Mammary epithelial cell (primary cell): ENCODE measurements at regions of chr12 and their contacts with region 1.

Region 1: GRCh38 chr12:15532364-15532977 is 210.2 kb downstream of the PTPRO start:
- DNase-seq: peak; percentile 70
- H3K4me3 ChIP-seq: no peak overlapping the region
- H3K27ac ChIP-seq: no peak overlapping the region
- H3K4me1 ChIP-seq: peaks cover 7% of the 10 kb centered on the region
- H3K27me3 ChIP-seq: no peaks in the 10 kb centered on the region
- CTCF ChIP-seq: peak; percentile 40 to 71

Region 2: GRCh38 chr12:15584366-15585041 is 52.0 kb after region 1 on chr12:
- CTCF ChIA-PET with region 1: interaction called, 29 read pairs
- dilution Hi-C with region 1: loop called (anchors 5 kb)
- in situ Hi-C with region 1: loop called in 1 of 2 experiments (anchors 10 kb)
- intact Hi-C with region 1: loop called (anchors 1 kb)
- DNase-seq: no peak
- H3K4me3 ChIP-seq: no peak overlapping the region
- H3K27ac ChIP-seq: no peak overlapping the region
- H3K4me1 ChIP-seq: no peaks in the 10 kb centered on the region
- H3K27me3 ChIP-seq: peaks cover under 1% of the 10 kb centered on the region
- CTCF ChIP-seq: peak; percentile 73 to 84

Region 3: GRCh38 chr12:15590180-15590826 is 57.8 kb after region 1 on chr12:
- CTCF ChIA-PET with region 1: no interaction called
- dilution Hi-C with region 1: loop called (anchors 5 kb)
- in situ Hi-C with region 1: loop called in 1 of 2 experiments (anchors 10 kb)
- intact Hi-C with region 1: loop called (anchors 1 kb)
- DNase-seq: peak; percentile 73
- H3K4me3 ChIP-seq: peak overlapping the region; percentile 51 to 54 (median 52)
- H3K27ac ChIP-seq: peak overlapping the region; percentile 6
- H3K4me1 ChIP-seq: peaks cover 5% of the 10 kb centered on the region
- H3K27me3 ChIP-seq: no peaks in the 10 kb centered on the region
- CTCF ChIP-seq: peak; percentile 78 to 90

Region 4: GRCh38 chr12:15899282-15899870 is 366.9 kb after region 1 on chr12:
- CTCF ChIA-PET with region 1: interaction called, 3 read pairs
- dilution Hi-C with region 1: no loop called
- in situ Hi-C with region 1: no loop called
- intact Hi-C with region 1: loop called (anchors 1 kb)
- DNase-seq: no peak
- H3K4me3 ChIP-seq: no peak overlapping the region
- H3K27ac ChIP-seq: no peak overlapping the region
- H3K4me1 ChIP-seq: no peaks in the 10 kb centered on the region
- H3K27me3 ChIP-seq: no peaks in the 10 kb centered on the region
- CTCF ChIP-seq: peak; percentile 56